Body of pancreas (tissue), 4 donors: ENCODE measurements at regions of chr9 and their contacts with region 1.

Region 1: DNA sequence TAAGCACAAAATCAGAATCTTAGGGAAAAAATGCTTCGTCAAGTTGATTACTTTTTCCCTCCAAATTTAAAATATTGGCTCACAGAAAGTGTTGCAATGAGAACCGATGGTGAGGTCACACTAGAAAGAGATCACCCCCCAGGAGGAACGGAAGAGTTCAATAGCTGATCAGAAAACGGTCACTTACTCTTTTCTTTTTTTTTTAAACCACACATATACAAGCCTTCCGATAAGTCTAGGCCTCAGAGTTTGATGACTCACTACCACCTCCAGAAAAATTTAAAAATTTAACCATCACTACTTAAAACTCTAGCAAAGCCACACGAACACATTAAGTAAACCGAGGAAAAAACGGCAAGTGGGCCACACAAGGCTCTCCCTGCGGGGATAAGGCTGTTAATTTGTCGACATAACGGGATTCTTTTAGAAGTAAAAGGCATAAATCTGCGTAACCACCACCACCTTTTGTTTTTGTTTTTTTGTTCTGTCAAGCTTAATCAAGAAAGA is 1.2 kb downstream of the SURF4 start:
- DNase-seq: no peak
- ATAC-seq: no peak
- H3K4me3 ChIP-seq: peak overlapping the region; percentile 77 to 87
- H3K27ac ChIP-seq: peak overlapping the region; percentile 90 to 98 (median 98)
- H3K4me1 ChIP-seq: peaks cover 60% of the 10 kb centered on the region
- H3K27me3 ChIP-seq: no peaks in the 10 kb centered on the region
- CTCF ChIP-seq: no peak
- POLR2A ChIP-seq: no peak

Region 2: DNA sequence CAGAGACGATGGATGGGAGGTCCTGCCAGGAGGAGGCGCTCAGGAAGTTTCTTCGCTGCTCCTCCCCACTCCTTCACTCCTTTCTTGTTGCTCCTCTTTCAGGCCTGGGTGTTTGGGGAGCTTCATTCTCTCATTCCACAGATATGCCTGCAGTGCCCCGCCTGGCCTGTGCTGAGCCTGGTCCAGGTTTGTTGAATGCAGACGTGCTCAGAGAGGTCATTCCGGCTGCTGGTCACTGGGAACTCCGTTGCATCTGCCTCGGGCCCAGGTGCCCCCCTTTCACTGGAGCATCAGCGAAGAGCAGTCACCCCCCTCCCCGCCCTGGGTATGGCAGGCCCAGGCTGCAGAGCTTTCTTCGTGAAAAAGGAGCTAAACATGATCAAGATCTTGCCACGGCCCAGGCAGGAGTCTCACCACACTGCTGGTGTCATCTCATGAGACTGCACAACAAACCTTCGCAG is 54.2 kb before region 1 on chr9:
- intact Hi-C with region 1: no loop called
- DNase-seq: no peak
- ATAC-seq: no peak
- H3K4me3 ChIP-seq: no peak overlapping the region
- H3K27ac ChIP-seq: no peak overlapping the region
- H3K4me1 ChIP-seq: no peaks in the 10 kb centered on the region
- H3K27me3 ChIP-seq: no peaks in the 10 kb centered on the region
- CTCF ChIP-seq: no peak
- POLR2A ChIP-seq: no peak

Region 3: GRCh38 chr9:133421615-133422542 is 47.2 kb after region 1 on chr9 and contains the start of gene ADAMTS13:
- intact Hi-C with region 1: loop called (anchors 5 kb)
- DNase-seq: no peak
- ATAC-seq: no peak
- H3K4me3 ChIP-seq: no peak within 1 kb of the TSS
- H3K27ac ChIP-seq: no peak within 1 kb of the TSS
- H3K4me1 ChIP-seq: peaks cover 12% of the 10 kb centered on the region
- H3K27me3 ChIP-seq: no peaks in the 10 kb centered on the region
- CTCF ChIP-seq: no peak
- POLR2A ChIP-seq: no peak
- total RNA-seq, gene ADAMTS13: 2.3 to 5.6 TPM